ENCODE measurements at regions of chr22 and their contacts with region 1.

Region 1: DNA sequence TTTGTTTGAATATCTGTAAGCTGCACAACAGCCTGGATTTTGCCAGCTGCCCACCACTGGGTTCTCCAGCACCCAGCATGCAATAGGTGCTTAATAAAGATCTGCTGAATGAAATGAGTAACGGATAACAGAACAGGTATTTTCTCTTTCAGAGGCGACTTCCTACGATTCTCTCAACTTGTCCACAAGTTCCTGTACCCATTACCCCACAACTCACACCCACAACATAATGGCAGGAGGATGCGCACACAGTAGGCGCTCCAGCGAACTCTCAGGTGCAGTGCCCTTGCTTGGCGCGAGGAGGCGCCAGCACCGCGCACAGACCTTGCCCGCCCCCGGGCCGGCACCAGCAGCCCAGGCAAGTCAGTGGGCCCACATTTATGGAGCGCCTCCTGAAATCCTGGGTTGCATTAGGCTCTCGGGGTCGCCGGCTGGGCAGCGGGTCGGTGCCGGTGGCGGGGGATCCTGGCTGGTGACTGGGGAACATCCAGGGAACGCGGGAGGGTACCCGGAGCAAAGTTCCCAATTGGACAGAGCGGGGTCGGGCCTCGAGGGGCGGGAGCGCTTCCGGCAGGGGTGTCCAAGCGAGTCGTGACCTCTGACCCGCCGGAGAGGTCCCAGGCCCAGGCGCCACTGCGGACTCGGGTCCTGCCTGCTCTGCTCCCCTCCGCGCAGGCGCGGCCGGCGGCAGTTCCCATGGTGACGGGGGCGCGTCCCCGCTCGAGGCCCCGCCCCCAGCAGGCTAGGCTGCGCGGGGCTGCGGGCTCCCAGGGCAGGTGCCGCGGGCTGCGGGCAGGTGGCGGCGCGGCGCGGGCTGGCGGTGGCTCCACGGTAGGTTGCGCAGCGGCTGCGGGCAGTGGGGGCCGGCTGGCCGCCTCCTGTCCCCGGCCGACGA is at the start of gene KIAA1671:
- DNase-seq: peak; percentile 88
- H3K4me3 ChIP-seq: peak within 1 kb of the TSS; percentile 59 to 79 (median 76)
- H3K27ac ChIP-seq: peak within 1 kb of the TSS; percentile 68 to 77 (median 71)
- H3K4me1 ChIP-seq: peaks cover 0 to 17% (median 9%) of the 10 kb centered on the region in 4 donors
- H3K27me3 ChIP-seq: peaks cover 0 to 10% (median 0%) of the 10 kb centered on the region in 3 donors
- CTCF ChIP-seq: peak; percentile 88 to 99 (median 98)
- EP300 ChIP-seq: no peak
- POLR2A ChIP-seq: no peak
- total RNA-seq, gene KIAA1671: 6.3 to 18.8 (median 7.6) TPM

Region 2: GRCh38 chr22:24894220-24894975 is 57.8 kb before region 1 on chr22:
- intact Hi-C with region 1: loop called (anchors 2 kb)
- DNase-seq: peak; percentile 93
- H3K4me3 ChIP-seq: peak overlapping the region in 2 of 4 donors; percentile 1 to 15
- H3K27ac ChIP-seq: peak overlapping the region; percentile 72 to 84 (median 80)
- H3K4me1 ChIP-seq: peaks cover 0 to 18% (median 17%) of the 10 kb centered on the region in 4 donors
- H3K27me3 ChIP-seq: no peaks in the 10 kb centered on the region
- CTCF ChIP-seq: no peak
- EP300 ChIP-seq: peak in 1 of 4 donors; percentile 65
- POLR2A ChIP-seq: no peak

Region 3: DNA sequence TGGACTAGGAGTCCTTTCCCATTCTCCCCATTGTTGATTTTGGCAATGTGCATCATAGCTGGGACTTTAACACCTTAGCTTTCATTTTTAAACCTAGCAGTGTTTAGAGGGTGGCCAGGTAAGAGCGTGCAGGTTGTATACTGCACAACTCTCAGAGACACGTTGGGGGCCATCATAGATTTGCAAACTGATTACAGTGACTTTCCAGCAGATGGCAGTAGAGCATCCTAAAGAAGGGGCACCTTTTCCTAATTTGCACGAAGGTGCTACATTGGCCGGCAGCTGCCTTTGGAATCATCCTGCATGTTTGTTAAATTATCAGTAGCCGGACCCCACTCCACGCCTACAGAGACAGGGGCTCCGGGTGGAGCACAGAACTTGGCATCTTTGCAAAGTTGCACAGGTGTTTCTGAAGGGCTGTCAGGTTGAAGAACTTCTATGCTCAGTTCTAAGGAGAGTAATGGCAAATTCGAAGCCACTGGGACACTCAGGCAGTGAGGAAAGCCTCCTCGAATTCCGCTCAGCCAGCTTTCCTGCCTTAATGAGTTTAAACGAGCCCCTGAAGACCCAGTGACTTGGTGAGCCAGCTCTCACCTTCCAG is 13.3 kb before region 1 on chr22:
- intact Hi-C with region 1: no loop called
- DNase-seq: no peak
- H3K4me3 ChIP-seq: no peak overlapping the region
- H3K27ac ChIP-seq: no peak overlapping the region
- H3K4me1 ChIP-seq: no peaks in the 10 kb centered on the region
- H3K27me3 ChIP-seq: no peaks in the 10 kb centered on the region
- CTCF ChIP-seq: peak in 3 of 4 experiments; percentile 54 to 64 (median 57)
- EP300 ChIP-seq: no peak
- POLR2A ChIP-seq: no peak

Region 4: GRCh38 chr22:25048659-25049647 is 96.8 kb after region 1 on chr22:
- intact Hi-C with region 1: loop called (anchors 1 kb)
- DNase-seq: no peak
- H3K4me3 ChIP-seq: no peak overlapping the region
- H3K27ac ChIP-seq: no peak overlapping the region
- H3K4me1 ChIP-seq: peaks cover 0 to 12% (median 6%) of the 10 kb centered on the region in 4 donors
- H3K27me3 ChIP-seq: no peaks in the 10 kb centered on the region
- CTCF ChIP-seq: peak; percentile 27 to 86 (median 78)
- EP300 ChIP-seq: no peak
- POLR2A ChIP-seq: no peak

Measured in sigmoid colon (tissue), 7 donors.